T-cell (primary cell): ENCODE measurements at regions of chr10 and their contacts with region 1.

Region 1: DNA sequence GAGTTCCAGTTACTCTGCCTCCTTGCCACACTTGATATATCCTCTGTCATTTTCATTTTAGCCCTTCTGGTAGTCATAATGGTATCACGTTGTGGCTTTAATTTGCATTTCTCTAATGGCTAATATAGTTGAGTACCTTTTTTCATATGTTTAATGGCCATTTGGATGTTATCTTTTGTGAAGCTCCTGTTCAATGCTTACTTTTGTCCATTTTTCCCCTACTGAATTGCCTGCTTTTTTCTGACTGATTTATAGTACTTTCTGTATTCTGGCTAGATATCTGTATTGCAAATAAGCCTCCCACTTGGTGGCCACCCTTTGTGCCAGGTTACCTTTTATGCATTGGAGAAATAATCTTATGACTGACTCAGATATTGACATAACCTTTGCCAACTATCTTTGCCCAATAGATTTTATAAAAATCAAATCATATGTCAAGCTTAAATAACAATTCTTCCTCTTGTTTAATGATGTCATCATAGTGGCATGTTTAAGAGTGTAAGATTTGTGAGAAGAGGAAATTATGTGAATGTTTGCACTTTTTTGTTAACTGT is 50.6 kb downstream of the PRPF18 start:
- DNase-seq: no peak
- ATAC-seq: no peak
- H3K4me3 ChIP-seq: no peak overlapping the region
- H3K4me3 Mint-ChIP-seq: no peak overlapping the region
- H3K27ac ChIP-seq: no peak overlapping the region
- H3K27ac Mint-ChIP-seq: no peak overlapping the region
- H3K4me1 ChIP-seq: no peaks in the 10 kb centered on the region
- H3K4me1 Mint-ChIP-seq: peaks cover 0 to 10% (median 0%) of the 10 kb centered on the region in 3 donors
- H3K27me3 ChIP-seq: no peaks in the 10 kb centered on the region
- H3K27me3 Mint-ChIP-seq: no peaks in the 10 kb centered on the region

Region 2: DNA sequence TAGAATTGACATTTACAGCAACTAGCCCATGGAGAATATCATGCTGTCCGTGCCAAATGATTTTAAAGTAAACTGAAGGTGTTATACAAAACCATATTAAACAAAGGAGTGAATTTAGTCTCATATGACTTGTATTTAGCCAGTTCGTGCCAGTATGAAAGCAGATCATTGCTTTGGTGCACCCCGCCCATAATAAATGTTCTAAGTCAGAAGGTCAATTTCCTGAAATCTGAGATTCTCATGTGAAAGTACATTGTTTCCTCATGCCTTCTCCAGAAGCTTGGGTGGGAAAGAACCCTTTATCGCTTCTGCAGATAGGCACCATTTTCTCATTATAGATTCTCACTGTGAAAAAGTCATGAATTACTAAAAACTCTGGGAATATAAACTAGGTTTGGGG is 1181.6 kb before region 1 on chr10:
- CTCF ChIA-PET with region 1: no interaction called
- POLR2A ChIA-PET with region 1: interaction called in 1 of 2 experiments, 16 read pairs
- DNase-seq: no peak
- ATAC-seq: no peak
- H3K4me3 ChIP-seq: no peak overlapping the region
- H3K4me3 Mint-ChIP-seq: no peak overlapping the region
- H3K27ac ChIP-seq: no peak overlapping the region
- H3K27ac Mint-ChIP-seq: no peak overlapping the region
- H3K4me1 ChIP-seq: peaks cover 0 to 5% of the 10 kb centered on the region in 2 experiments
- H3K4me1 Mint-ChIP-seq: peaks cover 15 to 23% (median 17%) of the 10 kb centered on the region in 3 donors
- H3K27me3 ChIP-seq: peaks cover 0 to 4% of the 10 kb centered on the region in 2 experiments
- H3K27me3 Mint-ChIP-seq: no peaks in the 10 kb centered on the region